Breast epithelium (tissue), 4 donors: ENCODE measurements at regions of chr3 and their contacts with region 1.

Region 1: DNA sequence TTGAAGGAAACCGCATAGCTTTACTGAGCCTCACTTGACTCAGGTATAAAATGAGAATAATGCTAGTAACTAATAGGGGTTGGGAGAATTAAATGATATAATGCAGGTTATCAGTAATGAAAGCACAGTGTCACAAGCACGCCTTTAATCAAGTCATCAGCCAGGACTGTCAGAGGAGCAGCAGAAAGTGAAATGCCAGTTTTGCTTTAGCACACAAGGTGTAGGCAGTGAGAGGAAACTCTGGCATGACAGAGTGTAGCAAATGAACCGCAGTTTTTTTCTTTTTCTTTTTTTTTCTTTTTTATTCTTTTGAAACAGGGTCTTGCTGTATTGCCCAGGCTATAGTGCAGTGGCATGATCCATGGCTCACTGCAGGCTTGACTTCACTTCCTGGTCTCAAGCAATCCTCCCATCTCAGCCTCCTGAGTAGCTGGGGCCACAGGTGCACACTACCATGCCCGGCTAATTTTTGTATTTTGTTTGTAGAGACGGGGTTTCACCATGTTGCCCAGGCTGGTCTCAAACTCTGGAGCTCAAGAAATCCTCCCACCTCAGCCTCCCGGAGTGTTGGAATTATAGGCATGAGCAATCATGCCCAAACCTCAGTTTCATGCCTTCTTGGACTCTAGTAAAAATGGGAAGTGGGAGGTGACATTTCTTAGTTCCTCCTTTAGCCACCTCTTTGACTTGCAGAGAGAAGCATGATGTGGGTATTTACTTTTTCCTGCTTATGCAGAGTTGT is 9.7 kb upstream of the SCAANT1 start:
- DNase-seq: no peak
- H3K4me3 ChIP-seq: no peak overlapping the region
- H3K27ac ChIP-seq: no peak overlapping the region
- H3K4me1 ChIP-seq: no peaks in the 10 kb centered on the region
- H3K27me3 ChIP-seq: no peaks in the 10 kb centered on the region
- CTCF ChIP-seq: no peak
- POLR2A ChIP-seq: no peak

Region 2: GRCh38 chr3:63364910-63365431 is 556.9 kb before region 1 on chr3:
- intact Hi-C with region 1: loop called (anchors 5 kb)
- DNase-seq: no peak
- H3K4me3 ChIP-seq: no peak overlapping the region
- H3K27ac ChIP-seq: no peak overlapping the region
- H3K4me1 ChIP-seq: no peaks in the 10 kb centered on the region
- H3K27me3 ChIP-seq: no peaks in the 10 kb centered on the region
- CTCF ChIP-seq: no peak
- POLR2A ChIP-seq: no peak

Region 3: GRCh38 chr3:64238971-64239667 is 317.2 kb after region 1 on chr3:
- intact Hi-C with region 1: no loop called
- DNase-seq: peak in 1 of 2 donors; percentile 81
- H3K4me3 ChIP-seq: peak overlapping the region in 1 of 3 donors; percentile 29
- H3K27ac ChIP-seq: peak overlapping the region; percentile 78 to 81
- H3K4me1 ChIP-seq: no peaks in the 10 kb centered on the region
- H3K27me3 ChIP-seq: no peaks in the 10 kb centered on the region
- CTCF ChIP-seq: no peak
- POLR2A ChIP-seq: no peak